MCF 10A (cell line): ENCODE measurements at regions of chr17 and their contacts with region 1.

Region 1: DNA sequence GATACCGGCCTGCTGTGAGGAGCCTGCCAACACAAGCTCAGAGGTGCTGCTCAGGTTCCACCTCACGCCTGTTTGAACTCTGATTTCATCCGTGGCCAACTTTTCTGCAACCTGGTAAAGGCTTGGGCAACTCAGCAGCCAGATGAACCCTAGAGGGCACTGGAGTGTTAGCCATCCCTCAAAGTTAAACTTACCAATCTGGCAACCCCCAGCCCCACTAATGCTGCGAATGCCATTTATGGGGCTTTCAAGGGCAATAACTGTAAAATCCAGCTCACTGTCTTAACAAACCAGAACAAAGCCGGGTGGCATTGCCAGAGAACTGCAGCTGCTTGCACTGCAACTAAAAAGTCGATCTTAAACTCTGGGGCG is 105.5 kb downstream of the AXIN2 start:
- DNase-seq: peak; percentile 30
- H3K4me3 Mint-ChIP-seq: no peak overlapping the region
- H3K27ac Mint-ChIP-seq: no peak overlapping the region
- H3K4me1 Mint-ChIP-seq: peaks cover 8% of the 10 kb centered on the region
- H3K27me3 Mint-ChIP-seq: no peaks in the 10 kb centered on the region
- CTCF ChIP-seq: no peak

Region 2: GRCh38 chr17:65698381-65699061 is 242.6 kb after region 1 on chr17:
- CTCF ChIA-PET with region 1: no interaction called
- POLR2A ChIA-PET with region 1: no interaction called
- intact Hi-C with region 1: no loop called
- DNase-seq: no peak
- H3K4me3 Mint-ChIP-seq: no peak overlapping the region
- H3K27ac Mint-ChIP-seq: no peak overlapping the region
- H3K4me1 Mint-ChIP-seq: no peaks in the 10 kb centered on the region
- H3K27me3 Mint-ChIP-seq: no peaks in the 10 kb centered on the region
- CTCF ChIP-seq: no peak

Region 3: GRCh38 chr17:65794572-65794971 is 338.6 kb after region 1 on chr17:
- CTCF ChIA-PET with region 1: interaction called, 9 read pairs
- POLR2A ChIA-PET with region 1: no interaction called
- intact Hi-C with region 1: loop called (anchors 5 kb)
- DNase-seq: peak; percentile 65
- H3K4me3 Mint-ChIP-seq: no peak overlapping the region
- H3K27ac Mint-ChIP-seq: no peak overlapping the region
- H3K4me1 Mint-ChIP-seq: no peaks in the 10 kb centered on the region
- H3K27me3 Mint-ChIP-seq: no peaks in the 10 kb centered on the region
- CTCF ChIP-seq: peak; percentile 64